ENCODE measurements at regions of chr1 and their contacts with region 1.

Region 1: DNA sequence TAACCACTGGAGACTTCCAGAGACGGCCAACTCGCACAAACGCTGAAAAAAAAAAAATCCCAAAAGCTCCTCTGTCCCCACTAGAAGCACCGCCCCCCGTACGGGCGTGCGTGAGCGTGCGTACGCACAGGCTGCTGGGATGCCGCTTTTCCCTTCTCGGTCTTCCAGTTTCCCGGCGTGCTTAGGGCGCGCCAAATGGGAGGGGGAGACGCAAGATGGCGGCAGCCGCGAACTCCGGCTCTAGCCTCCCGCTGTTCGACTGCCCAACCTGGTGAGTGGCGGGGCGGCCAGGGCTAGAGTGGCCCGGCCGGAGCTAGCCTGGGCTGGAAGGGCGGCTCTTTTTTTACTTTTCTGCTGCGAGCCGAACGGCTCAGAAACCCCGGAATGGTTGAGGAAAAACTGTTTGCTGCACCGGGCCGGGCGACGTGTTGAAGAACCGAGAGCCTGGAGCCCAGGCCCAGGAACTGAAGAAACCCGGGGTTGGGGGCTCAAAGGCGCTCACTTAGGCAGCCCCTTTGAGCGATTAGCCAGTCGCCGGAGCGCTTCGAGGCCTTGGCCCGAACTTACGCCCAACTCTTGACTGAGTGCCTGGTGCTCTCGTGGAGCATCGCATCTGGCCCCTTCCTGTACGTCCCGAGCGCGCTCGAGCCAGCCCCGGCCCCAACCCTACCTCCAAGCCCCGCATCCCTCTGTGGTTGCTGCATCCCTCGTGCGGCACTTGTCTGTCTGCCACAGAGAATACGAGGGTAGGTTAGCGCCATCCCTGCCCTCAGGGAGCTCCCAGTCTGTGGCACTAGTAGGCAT is at the start of gene PPP1R8:
- DNase-seq: peak; percentile 94
- H3K4me3 ChIP-seq: peak within 1 kb of the TSS; percentile 79 to 95 (median 88)
- H3K27ac ChIP-seq: peak within 1 kb of the TSS; percentile 85
- H3K4me1 ChIP-seq: peaks cover 14% of the 10 kb centered on the region
- H3K27me3 ChIP-seq: no peaks in the 10 kb centered on the region
- CTCF ChIP-seq: no peak
- total RNA-seq, gene PPP1R8: 37.0 to 42.5 TPM

Region 2: GRCh38 chr1:27772933-27773825 is 57.6 kb before region 1 on chr1 and contains the start of gene STX12:
- CTCF ChIA-PET with region 1: no interaction called
- dilution Hi-C with region 1: no loop called
- in situ Hi-C with region 1: no loop called
- intact Hi-C with region 1: loop called (anchors 5 kb)
- DNase-seq: peak; percentile 100
- H3K4me3 ChIP-seq: peak within 1 kb of the TSS; percentile 79 to 98 (median 83)
- H3K27ac ChIP-seq: peak within 1 kb of the TSS; percentile 79
- H3K4me1 ChIP-seq: peaks cover 8% of the 10 kb centered on the region
- H3K27me3 ChIP-seq: no peaks in the 10 kb centered on the region
- CTCF ChIP-seq: no peak
- total RNA-seq, gene STX12: 39.1 to 59.8 TPM